Caco-2 (cell line): ENCODE measurements at regions of chr16 and their contacts with region 1.

Region 1: GRCh38 chr16:77722309-77723107 is at the start of gene NUDT7:
- DNase-seq: peak; percentile 99
- H3K4me3 ChIP-seq: peak within 1 kb of the TSS; percentile 55
- H3K4me3 Mint-ChIP-seq: peak within 1 kb of the TSS; percentile 70
- H3K27ac Mint-ChIP-seq: peak within 1 kb of the TSS; percentile 71
- H3K4me1 ChIP-seq: no peaks in the 10 kb centered on the region; the same call in 1 of the 2 replicates
- H3K4me1 Mint-ChIP-seq: peaks cover 7% of the 10 kb centered on the region
- H3K27me3 ChIP-seq: no peaks in the 10 kb centered on the region
- H3K27me3 Mint-ChIP-seq: no peaks in the 10 kb centered on the region
- CTCF ChIP-seq: peak in 1 of 2 experiments; percentile 44
- total RNA-seq, gene NUDT7: 4.3 and 6.9 TPM in 2 replicates

Region 2: GRCh38 chr16:77488652-77489051 is 233.9 kb before region 1 on chr16:
- CTCF ChIA-PET with region 1: no interaction called
- POLR2A ChIA-PET with region 1: no interaction called
- intact Hi-C with region 1: no loop called
- DNase-seq: no peak
- H3K4me3 ChIP-seq: no peak overlapping the region
- H3K4me3 Mint-ChIP-seq: no peak overlapping the region
- H3K27ac Mint-ChIP-seq: no peak overlapping the region
- H3K4me1 ChIP-seq: no peaks in the 10 kb centered on the region
- H3K4me1 Mint-ChIP-seq: no peaks in the 10 kb centered on the region
- H3K27me3 ChIP-seq: no peaks in the 10 kb centered on the region
- H3K27me3 Mint-ChIP-seq: peaks cover 17% of the 10 kb centered on the region
- CTCF ChIP-seq: no peak

Region 3: DNA sequence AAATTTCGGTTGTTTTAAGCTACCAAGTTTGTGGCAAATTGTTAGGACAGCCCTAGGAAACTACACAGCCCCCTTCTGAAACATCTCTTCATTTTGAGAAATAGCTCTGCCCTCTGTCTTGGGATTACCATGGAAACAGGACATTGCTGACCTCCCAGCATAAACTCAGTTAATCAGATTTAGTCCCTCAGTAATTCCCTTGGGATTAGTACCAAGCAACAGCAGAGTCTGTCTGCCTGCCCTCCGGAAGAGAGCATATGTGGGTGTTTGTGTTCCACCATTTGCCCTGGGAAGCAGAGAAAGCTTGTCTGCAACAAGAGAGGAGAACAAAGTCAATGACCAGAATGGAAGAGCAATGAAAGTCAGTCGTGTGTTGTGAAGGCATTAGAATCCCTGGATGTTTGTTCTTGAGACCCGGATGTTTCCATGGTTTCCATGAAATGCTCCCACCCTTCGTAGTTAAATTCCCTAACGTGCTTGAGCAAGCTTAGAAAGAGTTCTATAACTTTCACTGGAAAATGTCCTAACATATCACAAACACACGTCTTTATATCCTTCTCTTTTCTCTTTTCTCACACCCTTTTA is 26.0 kb after region 1 on chr16:
- CTCF ChIA-PET with region 1: no interaction called
- POLR2A ChIA-PET with region 1: no interaction called
- intact Hi-C with region 1: loop called (anchors 2 kb)
- DNase-seq: no peak
- H3K4me3 ChIP-seq: no peak overlapping the region
- H3K4me3 Mint-ChIP-seq: no peak overlapping the region
- H3K27ac Mint-ChIP-seq: no peak overlapping the region
- H3K4me1 ChIP-seq: no peaks in the 10 kb centered on the region
- H3K4me1 Mint-ChIP-seq: no peaks in the 10 kb centered on the region
- H3K27me3 ChIP-seq: no peaks in the 10 kb centered on the region
- H3K27me3 Mint-ChIP-seq: peaks cover 10% of the 10 kb centered on the region
- CTCF ChIP-seq: no peak

Region 4: GRCh38 chr16:77788181-77789084 is 65.9 kb after region 1 on chr16 and contains the start of gene VAT1L:
- CTCF ChIA-PET with region 1: no interaction called
- POLR2A ChIA-PET with region 1: no interaction called
- intact Hi-C with region 1: loop called (anchors 1 kb)
- DNase-seq: peak; percentile 40 to 46
- H3K4me3 ChIP-seq: peak within 1 kb of the TSS; percentile 37
- H3K4me3 Mint-ChIP-seq: peak within 1 kb of the TSS; percentile 80
- H3K27ac Mint-ChIP-seq: no peak within 1 kb of the TSS
- H3K4me1 ChIP-seq: 0 out of 2 replicates have a peak, but pooled peaks cover 3% of the 10 kb centered on the region
- H3K4me1 Mint-ChIP-seq: no peaks in the 10 kb centered on the region
- H3K27me3 ChIP-seq: peaks cover 3% of the 10 kb centered on the region
- H3K27me3 Mint-ChIP-seq: peaks cover 40% of the 10 kb centered on the region
- CTCF ChIP-seq: no peak
- total RNA-seq, gene VAT1L: not detected in 2 replicates

Region 5: GRCh38 chr16:78099372-78100161 is 377.1 kb after region 1 on chr16 and contains the start of gene WWOX:
- CTCF ChIA-PET with region 1: no interaction called
- POLR2A ChIA-PET with region 1: no interaction called
- intact Hi-C with region 1: loop called (anchors 2 kb)
- DNase-seq: peak; percentile 98
- H3K4me3 ChIP-seq: peak within 1 kb of the TSS; percentile 97
- H3K4me3 Mint-ChIP-seq: peak within 1 kb of the TSS; percentile 90
- H3K27ac Mint-ChIP-seq: peak within 1 kb of the TSS; percentile 91
- H3K4me1 ChIP-seq: no peaks in the 10 kb centered on the region
- H3K4me1 Mint-ChIP-seq: peaks cover 14% of the 10 kb centered on the region
- H3K27me3 ChIP-seq: no peaks in the 10 kb centered on the region
- H3K27me3 Mint-ChIP-seq: peaks cover 1% of the 10 kb centered on the region
- CTCF ChIP-seq: peak; percentile 97
- total RNA-seq, gene WWOX: 45.0 and 47.8 TPM in 2 replicates